K562 (cell line): ENCODE measurements at regions of chr2 and their contacts with region 1.

Region 1: DNA sequence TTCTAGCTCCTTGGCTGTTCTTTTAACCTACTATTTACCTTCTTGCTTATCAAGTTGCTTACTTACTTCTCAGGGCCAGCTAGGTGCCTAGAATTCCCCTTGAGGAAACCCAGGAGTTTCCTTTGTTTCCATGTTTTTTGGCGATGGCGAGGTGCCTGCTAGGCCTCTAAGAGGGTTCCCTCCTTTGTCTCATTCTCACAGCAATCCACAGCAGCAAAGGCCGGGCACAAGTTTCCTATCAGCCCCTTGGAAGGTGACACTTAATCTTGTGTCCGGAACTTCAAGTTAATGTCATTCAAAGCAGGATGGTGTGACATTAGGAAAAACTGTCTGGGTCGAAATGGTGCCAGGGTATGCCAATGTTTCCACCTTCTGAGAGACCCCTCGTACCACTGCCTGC is 101.9 kb upstream of the EPC2 start:
- DNase-seq: no peak
- ATAC-seq: peak; percentile 16
- H3K4me3 ChIP-seq: no peak overlapping the region
- H3K27ac ChIP-seq: peak overlapping the region; percentile 72; the same call in 2 of the 3 replicates
- H3K4me1 ChIP-seq: peaks cover 5 to 27% of the 10 kb centered on the region in 2 experiments; a peak in 4 of 5 replicates
- H3K27me3 ChIP-seq: peaks cover 0 to 12% of the 10 kb centered on the region in 2 experiments; a peak in 2 of 5 replicates
- CTCF ChIP-seq: no peak
- EP300 ChIP-seq: no peak
- POLR2A ChIP-seq: no peak
- RAD21 ChIP-seq: no peak

Region 2: DNA sequence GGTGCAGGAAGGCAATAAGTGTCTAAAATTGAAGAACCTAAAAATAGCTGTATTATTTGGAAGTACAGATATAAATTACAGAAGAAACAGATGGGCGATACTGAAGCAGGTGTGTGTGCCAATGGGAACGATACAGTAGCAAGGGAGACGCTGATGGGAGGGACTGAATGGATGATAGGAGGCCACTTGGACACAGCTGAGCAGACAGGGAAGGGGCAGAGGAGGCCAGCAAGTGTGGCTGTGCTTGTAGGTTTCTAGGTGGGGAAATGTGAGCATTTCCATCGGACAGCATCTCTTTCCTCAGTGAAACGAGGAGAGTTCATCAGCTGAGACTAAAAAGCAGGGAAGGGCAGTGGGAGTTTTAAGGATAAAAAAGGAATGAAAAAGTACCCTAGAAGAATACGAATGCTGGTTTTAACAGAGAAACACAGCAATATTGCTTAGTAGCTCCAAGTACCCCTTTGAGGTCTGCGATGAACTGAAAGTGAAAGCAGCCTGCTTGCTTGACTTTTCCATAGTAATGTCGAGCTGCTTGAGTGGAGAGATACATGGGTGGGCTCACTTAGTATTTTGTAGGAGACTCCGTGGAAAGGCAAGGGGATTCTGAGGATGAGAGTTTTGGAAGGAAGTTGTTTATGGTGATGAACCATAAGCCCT is 10.2 kb after region 1 on chr2:
- CTCF ChIA-PET with region 1: no interaction called
- POLR2A ChIA-PET with region 1: interaction called, 11 read pairs
- in situ Hi-C with region 1: no loop called
- intact Hi-C with region 1: no loop called
- DNase-seq: no peak
- ATAC-seq: peak; percentile 52
- H3K4me3 ChIP-seq: peak overlapping the region; percentile 11
- H3K27ac ChIP-seq: no peak overlapping the region
- H3K4me1 ChIP-seq: no peaks in the 10 kb centered on the region
- H3K27me3 ChIP-seq: peaks cover 0 to 18% of the 10 kb centered on the region in 2 experiments; a peak in 3 of 5 replicates
- CTCF ChIP-seq: no peak
- EP300 ChIP-seq: no peak
- POLR2A ChIP-seq: no peak
- RAD21 ChIP-seq: no peak

Region 3: DNA sequence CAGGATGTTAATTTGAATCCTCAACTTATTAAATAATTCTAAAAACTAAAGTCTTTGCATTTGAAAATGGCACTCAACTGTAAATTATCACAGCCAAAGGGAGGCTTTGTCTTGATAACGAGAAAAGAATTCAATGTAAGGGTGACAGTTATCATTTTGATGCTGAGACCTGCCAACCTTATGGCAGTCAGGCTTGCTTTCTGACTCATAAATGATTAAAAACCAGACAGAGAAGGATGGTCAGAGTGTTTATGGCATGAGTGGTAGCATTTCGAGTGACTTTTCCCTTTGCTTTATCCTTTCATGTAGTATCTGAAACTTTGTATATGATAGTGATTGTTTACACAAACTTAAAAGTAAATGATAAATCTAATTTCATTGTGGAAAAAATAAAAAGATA is 48.0 kb after region 1 on chr2:
- CTCF ChIA-PET with region 1: no interaction called
- POLR2A ChIA-PET with region 1: no interaction called
- in situ Hi-C with region 1: no loop called
- intact Hi-C with region 1: no loop called
- DNase-seq: no peak
- ATAC-seq: no peak
- H3K4me3 ChIP-seq: no peak overlapping the region
- H3K27ac ChIP-seq: no peak overlapping the region
- H3K4me1 ChIP-seq: no peaks in the 10 kb centered on the region
- H3K27me3 ChIP-seq: peaks cover 19 to 23% of the 10 kb centered on the region in 2 experiments; a peak in 4 of 5 replicates
- CTCF ChIP-seq: no peak
- EP300 ChIP-seq: no peak
- POLR2A ChIP-seq: no peak
- RAD21 ChIP-seq: no peak

Region 4: DNA sequence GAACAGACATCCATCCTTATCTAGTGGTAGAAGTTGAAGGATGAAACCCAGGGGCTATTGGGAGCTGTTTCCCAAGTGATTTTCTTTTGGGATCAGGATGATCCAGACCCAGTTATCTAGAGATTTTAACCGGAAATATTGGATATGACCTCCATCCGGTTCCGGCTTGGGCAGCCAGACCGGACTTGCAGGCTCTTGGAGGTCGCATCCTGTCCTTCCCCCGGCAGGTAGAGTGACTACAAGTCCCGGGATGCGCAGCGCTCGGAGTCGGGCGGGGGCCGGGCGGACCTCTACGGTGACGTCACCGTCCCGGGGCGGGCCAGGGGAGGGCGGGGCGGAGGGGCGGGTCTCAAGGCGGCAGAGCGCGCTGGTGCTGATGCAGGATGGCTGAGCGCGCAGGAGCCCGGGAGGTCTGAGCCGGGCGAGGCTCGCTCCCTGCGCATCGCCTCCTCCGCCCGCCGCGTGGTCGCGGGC is 332.3 kb after region 1 on chr2 and contains the start of gene KIF5C:
- CTCF ChIA-PET with region 1: no interaction called
- POLR2A ChIA-PET with region 1: no interaction called
- in situ Hi-C with region 1: no loop called
- intact Hi-C with region 1: no loop called
- DNase-seq: peak; percentile 91 to 99 (median 97)
- ATAC-seq: peak; percentile 99
- H3K4me3 ChIP-seq: no peak within 1 kb of the TSS
- H3K27ac ChIP-seq: no peak within 1 kb of the TSS
- H3K4me1 ChIP-seq: peaks cover 0 to 9% of the 10 kb centered on the region in 2 experiments; a peak in 1 of 5 replicates
- H3K27me3 ChIP-seq: peaks cover 4 to 12% of the 10 kb centered on the region in 2 experiments; a peak in 3 of 5 replicates
- CTCF ChIP-seq: no peak
- EP300 ChIP-seq: no peak
- POLR2A ChIP-seq: no peak
- RAD21 ChIP-seq: no peak
- polyA plus RNA-seq, gene KIF5C: not detected